Heart left ventricle (tissue), 16 donors: ENCODE measurements at regions of chr20 and their contacts with region 1.

Region 1: DNA sequence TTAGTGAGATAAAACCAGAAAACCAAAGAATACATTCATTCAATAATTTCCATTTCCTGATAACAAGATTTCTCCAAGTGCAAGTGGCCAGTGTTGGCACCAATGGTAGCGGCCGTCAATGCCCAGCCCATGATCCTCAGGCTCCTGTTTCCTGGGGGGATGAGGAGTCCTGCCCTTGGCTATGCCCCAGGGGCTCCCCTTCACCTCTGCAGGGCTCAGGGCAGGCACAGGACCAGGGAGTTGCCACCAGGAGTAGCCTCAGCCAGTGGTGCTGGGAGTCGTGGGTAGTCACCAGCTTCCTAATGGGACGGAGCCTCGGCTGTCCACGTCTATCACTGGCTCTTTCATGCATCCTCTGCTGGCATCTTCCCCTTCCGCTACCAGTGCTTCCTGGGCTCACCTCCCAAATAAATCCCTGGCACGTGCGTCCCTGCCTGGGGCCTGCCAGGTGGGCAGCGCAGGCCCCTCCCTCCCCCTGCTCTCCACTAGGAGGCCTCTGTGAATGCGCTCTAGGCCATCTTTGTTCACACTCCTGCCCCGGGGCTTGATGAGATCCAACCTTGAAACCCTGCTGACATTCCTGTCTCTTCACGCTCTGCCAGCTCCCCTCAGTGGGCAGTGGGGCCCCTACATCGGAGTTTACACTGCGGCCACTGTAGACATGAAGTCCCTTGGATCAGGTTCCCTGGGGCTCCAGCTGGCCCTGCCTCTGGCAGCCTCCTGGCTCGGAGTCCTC is 215.7 kb downstream of the SYNDIG1 start:
- DNase-seq: no peak
- ATAC-seq: no peak
- H3K4me3 ChIP-seq: no peak overlapping the region
- H3K27ac ChIP-seq: no peak overlapping the region
- H3K4me1 ChIP-seq: peaks cover 0 to 6% (median 0%) of the 10 kb centered on the region in 12 donors
- H3K27me3 ChIP-seq: peaks cover 0 to 3% (median 0%) of the 10 kb centered on the region in 9 donors
- CTCF ChIP-seq: no peak
- POLR2A ChIP-seq: no peak

Region 2: DNA sequence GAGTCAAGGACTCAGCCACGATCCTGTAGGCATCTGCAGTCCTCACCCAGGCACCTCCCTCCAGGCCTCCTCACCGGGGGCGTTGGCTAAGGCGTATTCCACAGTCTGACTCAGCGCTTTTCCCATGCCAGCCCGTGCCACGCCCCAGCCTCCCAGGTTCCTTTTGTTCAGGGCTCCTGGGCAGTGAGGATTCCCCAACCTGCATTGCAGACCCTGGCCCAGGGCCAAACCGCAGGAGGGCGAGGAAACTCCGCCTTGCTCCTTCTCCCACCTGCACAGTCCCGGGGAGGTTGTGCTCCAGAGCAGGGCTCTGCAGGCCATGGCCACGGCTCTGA is 61.2 kb after region 1 on chr20:
- intact Hi-C with region 1: loop called in 1 of 10 experiments (anchors 10 kb)
- DNase-seq: no peak
- ATAC-seq: peak in 1 of 4 donors; percentile 48
- H3K4me3 ChIP-seq: no peak overlapping the region
- H3K27ac ChIP-seq: no peak overlapping the region
- H3K4me1 ChIP-seq: no peaks in the 10 kb centered on the region
- H3K27me3 ChIP-seq: peaks cover 0 to 6% (median 0%) of the 10 kb centered on the region in 9 donors
- CTCF ChIP-seq: no peak
- POLR2A ChIP-seq: no peak

Region 3: GRCh38 chr20:24808616-24809015 is 123.5 kb after region 1 on chr20:
- intact Hi-C with region 1: no loop called
- DNase-seq: peak in 1 of 5 donors; percentile 54
- ATAC-seq: peak in 1 of 4 donors; percentile 10
- H3K4me3 ChIP-seq: no peak overlapping the region
- H3K27ac ChIP-seq: no peak overlapping the region
- H3K4me1 ChIP-seq: no peaks in the 10 kb centered on the region
- H3K27me3 ChIP-seq: peaks cover 0 to 6% (median 0%) of the 10 kb centered on the region in 9 donors
- CTCF ChIP-seq: no peak
- POLR2A ChIP-seq: no peak